Activated CD4-positive, alpha-beta T cell treated with anti-CD3 and anti-CD28 coated beads for 36 hours (primary cell): ENCODE measurements at regions of chr2 and their contacts with region 1.

Region 1: DNA sequence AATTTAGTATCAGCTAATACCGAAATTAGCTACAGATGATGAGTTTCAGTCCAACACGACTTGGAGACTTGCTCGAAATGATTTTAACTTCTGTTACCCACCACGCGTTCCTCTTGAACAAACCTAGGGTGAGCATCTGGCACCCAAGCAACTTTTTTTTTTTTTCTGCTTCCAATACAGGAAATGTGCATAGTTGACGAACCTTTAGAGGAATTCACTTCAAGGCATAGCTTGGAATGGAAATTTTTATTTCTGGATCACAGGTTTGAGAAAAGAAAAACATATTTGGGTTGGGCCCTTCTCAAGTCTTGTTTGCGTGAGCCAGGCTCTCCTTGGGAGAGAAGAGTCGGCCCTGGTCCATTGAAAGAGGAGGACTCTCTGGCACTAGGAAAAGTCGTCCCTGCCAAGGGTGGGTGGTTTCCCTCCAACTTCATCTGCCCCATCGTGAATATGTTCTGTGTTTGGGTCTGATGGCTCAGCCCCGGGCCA is 37.4 kb upstream of the RPL31 start:
- DNase-seq: no peak
- ATAC-seq: no peak
- H3K4me3 Mint-ChIP-seq: no peak overlapping the region
- H3K27ac Mint-ChIP-seq: no peak overlapping the region
- H3K4me1 Mint-ChIP-seq: peaks cover 6% of the 10 kb centered on the region
- H3K27me3 Mint-ChIP-seq: no peaks in the 10 kb centered on the region

Region 2: GRCh38 chr2:101026923-101027469 is 62.3 kb after region 1 on chr2:
- CTCF ChIA-PET with region 1: no interaction called
- POLR2A ChIA-PET with region 1: interaction called, 11 read pairs
- intact Hi-C with region 1: no loop called
- DNase-seq: no peak
- ATAC-seq: no peak
- H3K4me3 Mint-ChIP-seq: no peak overlapping the region
- H3K27ac Mint-ChIP-seq: no peak overlapping the region
- H3K4me1 Mint-ChIP-seq: no peaks in the 10 kb centered on the region
- H3K27me3 Mint-ChIP-seq: no peaks in the 10 kb centered on the region